BJ (cell line): ENCODE measurements at regions of chr4 and their contacts with region 1.

Region 1: GRCh38 chr4:153137159-153137558 is 67.1 kb upstream of the TRIM2 start:
- DNase-seq: no peak
- H3K4me3 ChIP-seq: no peak overlapping the region
- H3K27me3 ChIP-seq: peaks cover 2% of the 10 kb centered on the region
- CTCF ChIP-seq: no peak

Region 2: DNA sequence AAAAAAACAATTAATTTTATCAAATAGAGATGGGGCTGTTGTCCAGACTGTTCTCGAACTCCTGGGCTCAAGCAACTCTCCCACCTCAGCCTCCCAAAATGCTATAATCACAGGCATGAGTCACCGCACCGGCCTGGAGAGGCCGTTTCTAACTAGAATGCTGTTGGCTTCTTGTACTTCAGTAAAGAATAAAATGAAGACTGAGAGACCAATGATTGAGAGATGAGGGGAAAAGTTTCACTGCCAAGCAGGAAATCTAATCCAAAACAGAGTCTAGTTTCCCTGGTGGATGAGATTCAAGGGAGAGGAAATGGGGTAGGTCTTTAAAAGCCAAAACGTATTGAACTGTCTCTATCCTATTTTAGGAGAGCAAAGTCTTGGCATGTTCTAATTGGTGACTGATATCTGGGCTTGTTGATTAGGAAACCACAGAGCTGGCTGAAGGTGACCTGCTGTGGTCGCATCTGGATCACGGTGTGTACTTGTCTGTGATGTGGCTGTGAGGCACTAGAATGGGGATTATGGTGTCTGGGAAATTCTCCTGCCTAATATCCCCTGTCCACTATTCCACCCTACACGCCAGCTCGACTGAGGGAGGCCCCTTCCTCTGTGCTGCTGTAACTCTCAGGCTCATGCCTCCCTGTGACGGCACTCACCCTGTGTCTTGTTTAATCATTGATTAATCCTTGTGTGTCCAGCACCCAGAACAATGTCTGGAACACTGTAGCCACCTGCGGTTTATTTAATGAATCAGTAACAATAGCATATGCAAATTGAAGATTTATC is 52.0 kb after region 1 on chr4:
- CTCF ChIA-PET with region 1: no interaction called
- POLR2A ChIA-PET with region 1: no interaction called
- DNase-seq: no peak
- H3K4me3 ChIP-seq: no peak overlapping the region
- H3K27me3 ChIP-seq: no peaks in the 10 kb centered on the region
- CTCF ChIP-seq: no peak

Region 3: DNA sequence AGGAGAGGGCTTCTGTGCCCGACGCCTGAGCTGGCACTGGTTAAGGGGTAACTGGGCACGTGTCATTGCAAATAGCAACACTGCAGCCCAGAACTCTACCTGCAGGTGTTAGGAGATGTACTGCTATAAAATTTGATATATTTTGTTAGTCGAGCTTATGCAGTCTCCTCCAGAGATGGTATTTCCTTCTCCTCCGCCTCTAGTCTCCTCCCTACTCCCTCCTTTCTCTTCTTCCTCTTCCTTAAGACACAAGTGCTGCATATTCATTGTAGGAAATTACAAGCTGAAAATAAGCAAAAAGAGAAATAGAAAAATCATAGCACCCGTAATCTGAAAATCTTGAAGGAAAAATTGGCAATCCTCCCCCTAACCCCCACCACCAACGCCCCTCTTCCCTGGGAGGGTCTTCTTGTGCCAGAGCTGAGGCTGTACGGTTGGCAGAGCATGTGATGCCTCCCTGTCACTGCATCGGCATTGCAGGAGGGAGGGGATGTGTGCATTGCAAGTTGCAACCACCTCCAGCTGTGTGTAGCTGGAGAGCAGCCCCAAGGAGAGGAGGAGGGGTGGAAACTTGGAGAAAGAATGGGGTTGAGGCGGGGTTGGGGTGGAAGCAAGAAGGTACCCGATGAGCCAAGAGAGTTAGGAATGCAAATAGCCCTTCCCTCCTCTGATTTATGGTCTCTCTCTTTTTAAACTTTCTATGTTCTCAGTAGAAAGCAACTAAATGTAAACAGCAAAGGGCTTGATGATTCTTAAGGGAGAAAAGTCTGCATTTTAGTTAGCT is 159.1 kb after region 1 on chr4:
- CTCF ChIA-PET with region 1: no interaction called
- POLR2A ChIA-PET with region 1: no interaction called
- DNase-seq: peak; percentile 40
- H3K4me3 ChIP-seq: no peak overlapping the region
- H3K27me3 ChIP-seq: no peaks in the 10 kb centered on the region
- CTCF ChIP-seq: no peak

Region 4: GRCh38 chr4:153366486-153366885 is 229.3 kb after region 1 on chr4:
- CTCF ChIA-PET with region 1: no interaction called
- POLR2A ChIA-PET with region 1: interaction called, 12 read pairs
- DNase-seq: no peak
- H3K4me3 ChIP-seq: no peak overlapping the region
- H3K27me3 ChIP-seq: no peaks in the 10 kb centered on the region
- CTCF ChIP-seq: no peak